Mammary epithelial cell (primary cell): ENCODE measurements at regions of chr5 and their contacts with region 1.

Region 1: DNA sequence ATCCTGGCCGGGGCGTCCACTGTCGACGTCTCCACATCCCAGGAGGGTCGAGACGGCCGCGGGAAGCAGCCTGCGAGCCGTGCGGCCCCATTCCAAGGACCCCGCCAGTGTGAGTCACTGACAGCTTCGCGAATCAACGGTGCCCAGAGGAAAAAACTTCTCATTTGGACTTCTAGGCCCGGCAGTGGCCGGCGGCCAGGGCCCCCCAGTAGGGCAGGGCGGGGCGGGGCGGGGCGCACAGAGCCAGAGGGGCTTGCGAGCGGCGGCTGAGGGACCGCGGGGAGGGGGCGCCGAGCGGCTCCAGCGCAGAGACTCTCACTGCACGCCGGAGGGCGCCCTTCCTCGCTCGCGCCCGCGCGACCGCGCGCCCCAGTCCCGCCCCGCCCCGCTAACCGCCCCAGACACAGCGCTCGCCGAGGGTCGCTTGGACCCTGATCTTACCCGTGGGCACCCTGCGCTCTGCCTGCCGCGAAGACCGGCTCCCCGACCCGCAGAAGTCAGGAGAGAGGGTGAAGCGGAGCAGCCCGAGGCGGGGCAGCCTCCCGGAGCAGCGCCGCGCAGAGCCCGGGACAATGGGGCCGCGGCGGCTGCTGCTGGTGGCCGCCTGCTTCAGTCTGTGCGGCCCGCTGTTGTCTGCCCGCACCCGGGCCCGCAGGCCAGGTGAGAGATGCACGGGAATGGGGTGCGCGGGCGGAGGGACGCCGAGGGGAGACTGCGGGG is at the start of gene F2R:
- DNase-seq: peak; percentile 44
- H3K4me3 ChIP-seq: peak within 1 kb of the TSS; percentile 83 to 95 (median 92)
- H3K27ac ChIP-seq: peak within 1 kb of the TSS; percentile 61
- H3K4me1 ChIP-seq: peaks cover 20% of the 10 kb centered on the region
- H3K27me3 ChIP-seq: no peaks in the 10 kb centered on the region
- CTCF ChIP-seq: peak; percentile 16 to 50
- total RNA-seq, gene F2R: 30.7 to 81.4 TPM

Region 2: GRCh38 chr5:76641514-76642120 is 74.3 kb before region 1 on chr5:
- CTCF ChIA-PET with region 1: no interaction called
- dilution Hi-C with region 1: no loop called
- in situ Hi-C with region 1: no loop called
- intact Hi-C with region 1: loop called (anchors 2 kb)
- DNase-seq: peak; percentile 41
- H3K4me3 ChIP-seq: no peak overlapping the region
- H3K27ac ChIP-seq: no peak overlapping the region
- H3K4me1 ChIP-seq: peaks cover 7% of the 10 kb centered on the region
- H3K27me3 ChIP-seq: no peaks in the 10 kb centered on the region
- CTCF ChIP-seq: peak; percentile 83 to 86

Region 3: GRCh38 chr5:76691467-76692138 is 24.3 kb before region 1 on chr5:
- CTCF ChIA-PET with region 1: no interaction called
- dilution Hi-C with region 1: no loop called
- in situ Hi-C with region 1: no loop called
- intact Hi-C with region 1: loop called (anchors 1 kb)
- DNase-seq: no peak
- H3K4me3 ChIP-seq: no peak overlapping the region
- H3K27ac ChIP-seq: no peak overlapping the region
- H3K4me1 ChIP-seq: peaks cover 43% of the 10 kb centered on the region
- H3K27me3 ChIP-seq: no peaks in the 10 kb centered on the region
- CTCF ChIP-seq: no peak

Region 4: DNA sequence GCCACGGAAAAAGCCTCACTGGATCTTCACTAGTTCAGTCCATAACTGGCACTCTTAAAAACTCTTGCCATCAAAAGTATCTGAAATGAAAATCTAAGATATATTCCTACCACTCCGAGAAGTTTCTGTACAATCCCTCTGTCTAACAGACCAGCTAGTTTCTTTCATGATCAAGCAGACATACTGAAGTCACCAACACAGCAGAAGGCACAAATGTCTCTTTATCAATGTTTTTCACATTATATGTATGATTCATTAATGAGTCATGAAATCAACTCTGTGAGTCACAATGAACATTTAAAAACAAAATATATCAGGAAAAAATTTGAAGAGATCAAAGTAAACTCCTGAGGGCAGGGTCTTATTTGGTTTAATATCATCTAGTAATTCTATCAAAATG is 50.9 kb after region 1 on chr5:
- CTCF ChIA-PET with region 1: no interaction called
- dilution Hi-C with region 1: no loop called
- in situ Hi-C with region 1: loop called in 1 of 2 experiments (anchors 10 kb)
- intact Hi-C with region 1: loop called (anchors 1 kb)
- DNase-seq: peak; percentile 51
- H3K4me3 ChIP-seq: no peak overlapping the region
- H3K27ac ChIP-seq: no peak overlapping the region
- H3K4me1 ChIP-seq: peaks cover 13% of the 10 kb centered on the region
- H3K27me3 ChIP-seq: no peaks in the 10 kb centered on the region
- CTCF ChIP-seq: no peak

Region 5: DNA sequence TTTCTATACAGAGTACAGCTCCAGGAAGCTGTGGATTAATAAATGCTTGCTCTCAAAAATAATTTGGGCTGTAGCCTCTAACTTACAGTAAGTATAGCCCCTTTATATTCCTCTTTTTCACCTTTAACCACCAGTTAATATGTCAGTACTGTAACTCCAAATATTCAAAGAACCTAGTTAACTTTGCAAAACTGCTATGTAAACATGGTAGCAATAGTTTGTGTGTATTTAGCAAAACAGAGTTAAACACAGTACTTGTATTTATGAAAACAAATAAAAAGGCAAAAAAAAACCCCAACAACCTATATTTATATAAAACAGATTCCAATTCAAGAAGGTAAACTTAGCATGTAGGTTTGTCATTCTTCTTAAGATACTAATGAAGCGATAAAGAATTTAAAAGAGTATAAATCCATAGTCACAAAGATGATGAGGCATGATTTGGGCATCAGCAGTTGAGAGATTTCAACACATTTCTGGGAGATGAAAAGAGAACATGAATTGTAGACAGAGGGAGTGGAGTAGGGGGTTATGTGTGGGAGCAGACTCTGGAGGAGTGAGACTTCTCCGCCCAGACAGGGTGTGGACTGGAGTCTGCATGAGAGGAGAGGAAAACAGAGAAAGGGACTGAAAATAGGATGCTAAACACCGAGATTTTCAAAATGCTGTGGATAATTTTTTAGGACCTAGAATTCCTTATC is 56.0 kb after region 1 on chr5:
- CTCF ChIA-PET with region 1: no interaction called
- dilution Hi-C with region 1: loop called (anchors 5 kb)
- in situ Hi-C with region 1: loop called in 1 of 2 experiments (anchors 10 kb)
- intact Hi-C with region 1: loop called (anchors 1 kb)
- DNase-seq: no peak
- H3K4me3 ChIP-seq: no peak overlapping the region
- H3K27ac ChIP-seq: no peak overlapping the region
- H3K4me1 ChIP-seq: no peaks in the 10 kb centered on the region
- H3K27me3 ChIP-seq: no peaks in the 10 kb centered on the region
- CTCF ChIP-seq: no peak

Region 6: GRCh38 chr5:76818844-76819831 is 103.2 kb after region 1 on chr5 and contains the start of gene F2RL1:
- CTCF ChIA-PET with region 1: no interaction called
- dilution Hi-C with region 1: no loop called
- in situ Hi-C with region 1: no loop called
- intact Hi-C with region 1: loop called (anchors 2 kb)
- DNase-seq: peak; percentile 98
- H3K4me3 ChIP-seq: peak within 1 kb of the TSS; percentile 81 to 97 (median 94)
- H3K27ac ChIP-seq: peak within 1 kb of the TSS; percentile 97
- H3K4me1 ChIP-seq: peaks cover 39% of the 10 kb centered on the region
- H3K27me3 ChIP-seq: no peaks in the 10 kb centered on the region
- CTCF ChIP-seq: no peak
- total RNA-seq, gene F2RL1: 57.2 to 93.5 TPM